Activated naive CD4-positive, alpha-beta T cell treated with anti-CD3 and anti-CD28 coated beads for 36 hours (primary cell): ENCODE measurements at regions of chr5 and their contacts with region 1.

Region 1: DNA sequence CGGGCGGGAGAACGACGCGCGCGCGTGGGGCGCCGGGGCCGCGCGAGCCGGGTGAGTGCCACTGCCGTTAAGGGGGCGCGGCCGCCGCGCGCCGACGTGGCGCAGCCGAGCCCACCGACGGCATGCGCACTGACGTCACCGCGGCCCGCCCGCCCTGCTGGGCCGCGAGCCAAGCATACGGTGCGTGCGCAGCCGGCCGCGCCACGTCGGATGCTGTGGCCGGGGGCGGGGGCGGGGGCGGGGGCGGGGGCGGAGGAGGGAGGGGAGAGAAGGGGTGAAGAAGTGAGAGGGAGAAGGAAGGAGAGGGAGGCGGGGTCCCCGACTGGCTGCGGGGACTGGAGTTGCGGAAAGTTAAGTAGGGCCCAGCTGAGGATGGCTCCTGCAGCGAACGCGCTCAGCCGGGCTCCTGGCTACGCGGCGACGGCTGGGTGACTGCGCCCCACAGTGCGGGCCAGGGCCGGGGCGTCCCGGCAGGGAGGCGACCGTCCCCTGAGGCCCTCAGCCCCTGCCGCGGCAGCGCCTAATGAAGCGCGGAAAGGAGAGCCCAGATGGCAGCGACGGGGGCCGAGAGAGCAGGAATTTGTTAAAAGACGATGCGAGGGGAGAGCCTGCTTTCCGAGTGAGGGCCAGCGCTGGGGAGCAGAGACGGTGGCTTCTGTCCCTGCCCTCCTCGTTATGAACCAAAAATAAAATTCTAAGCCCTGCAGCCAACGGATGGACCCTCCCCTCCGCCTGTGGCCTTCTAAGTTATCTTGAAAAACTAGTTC is at the start of gene DAP:
- DNase-seq: peak; percentile 78
- H3K4me3 Mint-ChIP-seq: peak within 1 kb of the TSS; percentile 84
- H3K27ac Mint-ChIP-seq: peak within 1 kb of the TSS; percentile 83
- H3K4me1 Mint-ChIP-seq: peaks cover 41% of the 10 kb centered on the region
- H3K27me3 Mint-ChIP-seq: peaks cover 3% of the 10 kb centered on the region
- total RNA-seq, gene DAP: 29.5 to 29.7 TPM

Region 2: GRCh38 chr5:10249948-10250803 is 511.2 kb before region 1 on chr5 and contains the start of gene CCT5:
- CTCF ChIA-PET with region 1: no interaction called
- intact Hi-C with region 1: loop called (anchors 1 kb)
- DNase-seq: peak; percentile 93
- H3K4me3 Mint-ChIP-seq: peak within 1 kb of the TSS; percentile 86
- H3K27ac Mint-ChIP-seq: peak within 1 kb of the TSS; percentile 99
- H3K4me1 Mint-ChIP-seq: peaks cover 47% of the 10 kb centered on the region
- H3K27me3 Mint-ChIP-seq: no peaks in the 10 kb centered on the region
- total RNA-seq, gene CCT5: 414 to 419 TPM

Region 3: DNA sequence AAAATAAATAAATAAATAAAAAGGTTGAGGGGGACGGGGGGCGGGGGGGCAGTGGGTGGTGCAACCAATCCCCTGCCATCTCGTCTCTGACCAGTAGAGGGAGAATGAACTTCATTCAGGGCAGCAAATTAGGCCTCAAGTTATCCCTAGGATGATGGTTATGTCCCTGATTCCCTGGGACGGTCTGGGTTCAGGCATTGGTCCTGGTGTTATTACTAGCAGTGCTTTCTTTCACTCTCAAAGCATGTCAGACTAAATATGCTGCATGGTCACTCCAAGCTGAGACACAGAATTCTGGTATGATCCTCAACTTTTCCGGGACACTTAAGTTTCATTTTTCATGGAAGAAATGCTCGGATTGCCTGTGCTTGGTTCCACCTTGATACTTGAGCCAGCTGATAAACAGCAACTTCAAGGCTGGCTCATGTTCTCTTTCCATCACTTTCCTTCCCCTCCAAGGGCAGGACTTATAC is 59.7 kb before region 1 on chr5:
- CTCF ChIA-PET with region 1: no interaction called
- intact Hi-C with region 1: loop called (anchors 5 kb)
- DNase-seq: peak; percentile 37
- H3K4me3 Mint-ChIP-seq: no peak overlapping the region
- H3K27ac Mint-ChIP-seq: no peak overlapping the region
- H3K4me1 Mint-ChIP-seq: peaks cover 47% of the 10 kb centered on the region
- H3K27me3 Mint-ChIP-seq: no peaks in the 10 kb centered on the region